Ascending aorta (tissue), 2 donors: ENCODE measurements at regions of chr17 and their contacts with region 1.

Region 1: GRCh38 chr17:75154195-75155106 is at the start of gene JPT1:
- DNase-seq: peak; percentile 95 to 99
- H3K4me3 ChIP-seq: peak within 1 kb of the TSS; percentile 94 to 98
- H3K27ac ChIP-seq: peak within 1 kb of the TSS; percentile 51 to 69
- H3K4me1 ChIP-seq: peaks cover 6% of the 10 kb centered on the region in 2 donors
- H3K27me3 ChIP-seq: no peaks in the 10 kb centered on the region
- CTCF ChIP-seq: peak in 1 of 3 experiments; percentile 14
- total RNA-seq, gene JPT1: 23.0 TPM

Region 2: DNA sequence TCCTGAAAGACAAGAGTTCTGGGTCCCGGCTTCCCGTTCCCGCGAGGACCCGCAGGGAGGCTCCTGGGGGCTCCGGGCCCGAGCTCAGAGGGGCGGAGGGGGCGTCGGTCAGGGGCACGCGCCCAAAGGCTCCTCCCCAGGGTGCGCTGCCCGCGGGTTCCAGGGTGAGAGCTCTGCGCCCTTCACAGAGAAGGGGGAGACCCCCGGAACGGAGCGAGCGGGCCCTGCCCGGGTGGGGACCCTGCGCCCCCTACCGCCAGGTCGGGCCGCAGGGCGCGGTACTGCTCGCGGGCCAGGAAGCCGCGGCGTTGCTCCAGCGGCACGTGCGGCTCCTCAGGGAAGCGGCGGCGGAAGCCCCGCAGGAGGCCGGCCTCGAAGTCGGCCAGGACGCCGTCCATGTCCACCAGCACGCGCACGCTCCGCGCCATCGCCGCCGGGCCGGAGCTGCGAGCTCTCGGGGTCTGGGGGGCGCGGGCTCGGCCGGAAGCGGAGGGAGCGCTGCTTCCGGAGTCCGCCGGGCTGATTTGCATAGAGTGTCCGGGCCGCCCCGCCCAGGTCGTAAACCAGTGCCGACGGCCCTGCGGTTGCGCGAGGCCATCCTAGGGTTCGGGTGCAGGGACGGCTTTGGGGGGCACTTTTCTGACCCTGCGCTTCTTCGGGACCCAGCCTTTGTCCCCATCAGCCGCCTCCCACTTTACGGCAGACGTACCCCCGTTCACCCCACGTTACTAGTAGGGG is 23.0 kb before region 1 on chr17 and contains the start of gene NT5C:
- intact Hi-C with region 1: loop called (anchors 2 kb)
- DNase-seq: peak in 1 of 2 donors; percentile 85
- H3K4me3 ChIP-seq: peak within 1 kb of the TSS; percentile 46 to 85
- H3K27ac ChIP-seq: peak within 1 kb of the TSS; percentile 90
- H3K4me1 ChIP-seq: peaks cover 0 to 6% of the 10 kb centered on the region in 2 donors
- H3K27me3 ChIP-seq: no peaks in the 10 kb centered on the region
- CTCF ChIP-seq: peak; percentile 58 to 76 (median 76)
- total RNA-seq, gene NT5C: 18.3 TPM

Region 3: DNA sequence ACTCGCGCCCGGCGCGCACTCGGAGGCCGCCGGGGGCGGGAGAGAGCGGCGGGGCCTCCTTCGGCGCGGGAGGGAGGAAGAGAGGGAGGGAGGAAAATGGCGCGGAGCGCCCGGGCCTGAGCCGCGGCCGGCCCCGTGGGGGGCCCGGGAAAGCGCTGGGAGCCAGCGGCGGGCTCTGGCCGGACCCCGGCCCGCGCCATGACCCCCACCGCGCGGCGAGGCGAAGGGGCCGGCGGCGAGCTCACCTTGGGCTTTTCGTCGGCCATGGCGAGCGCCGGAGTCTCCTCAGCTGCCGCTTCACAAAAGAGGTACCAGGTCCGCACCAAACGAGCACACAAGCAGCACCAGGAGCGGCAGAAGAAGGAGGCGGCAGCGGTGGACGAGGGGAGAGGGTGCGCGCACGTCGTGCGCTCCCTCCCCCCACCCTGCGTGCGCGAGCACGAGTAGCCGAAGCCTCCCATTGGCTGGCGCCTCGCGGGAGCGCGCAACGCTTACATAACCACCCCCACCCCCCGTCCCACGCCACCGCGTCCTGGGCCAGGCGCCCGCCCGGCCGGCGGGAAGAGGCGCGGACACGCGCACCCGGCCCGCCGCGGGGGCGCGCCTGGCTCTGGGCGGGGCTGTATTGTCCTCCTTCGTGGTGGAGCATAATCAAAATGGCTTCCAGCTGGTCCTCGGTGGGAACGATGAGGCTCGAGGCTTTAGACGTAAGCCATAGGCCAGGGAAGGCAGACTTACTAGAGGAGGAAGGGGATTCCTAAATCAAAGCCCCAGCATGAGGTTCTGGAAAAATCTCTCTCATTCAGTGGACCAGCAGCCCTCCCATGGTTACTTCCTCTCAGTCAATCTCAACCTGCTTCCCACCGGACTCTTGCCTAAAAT is 28.4 kb after region 1 on chr17 and contains the start of gene SUMO2:
- intact Hi-C with region 1: loop called (anchors 1 kb)
- DNase-seq: peak; percentile 70 to 97
- H3K4me3 ChIP-seq: peak within 1 kb of the TSS; percentile 80 to 97
- H3K27ac ChIP-seq: peak within 1 kb of the TSS; percentile 94 to 100
- H3K4me1 ChIP-seq: peaks cover 6 to 18% of the 10 kb centered on the region in 2 donors
- H3K27me3 ChIP-seq: no peaks in the 10 kb centered on the region
- CTCF ChIP-seq: peak in 2 of 3 experiments; percentile 43 to 45
- total RNA-seq, gene SUMO2: 23.9 TPM

Region 4: DNA sequence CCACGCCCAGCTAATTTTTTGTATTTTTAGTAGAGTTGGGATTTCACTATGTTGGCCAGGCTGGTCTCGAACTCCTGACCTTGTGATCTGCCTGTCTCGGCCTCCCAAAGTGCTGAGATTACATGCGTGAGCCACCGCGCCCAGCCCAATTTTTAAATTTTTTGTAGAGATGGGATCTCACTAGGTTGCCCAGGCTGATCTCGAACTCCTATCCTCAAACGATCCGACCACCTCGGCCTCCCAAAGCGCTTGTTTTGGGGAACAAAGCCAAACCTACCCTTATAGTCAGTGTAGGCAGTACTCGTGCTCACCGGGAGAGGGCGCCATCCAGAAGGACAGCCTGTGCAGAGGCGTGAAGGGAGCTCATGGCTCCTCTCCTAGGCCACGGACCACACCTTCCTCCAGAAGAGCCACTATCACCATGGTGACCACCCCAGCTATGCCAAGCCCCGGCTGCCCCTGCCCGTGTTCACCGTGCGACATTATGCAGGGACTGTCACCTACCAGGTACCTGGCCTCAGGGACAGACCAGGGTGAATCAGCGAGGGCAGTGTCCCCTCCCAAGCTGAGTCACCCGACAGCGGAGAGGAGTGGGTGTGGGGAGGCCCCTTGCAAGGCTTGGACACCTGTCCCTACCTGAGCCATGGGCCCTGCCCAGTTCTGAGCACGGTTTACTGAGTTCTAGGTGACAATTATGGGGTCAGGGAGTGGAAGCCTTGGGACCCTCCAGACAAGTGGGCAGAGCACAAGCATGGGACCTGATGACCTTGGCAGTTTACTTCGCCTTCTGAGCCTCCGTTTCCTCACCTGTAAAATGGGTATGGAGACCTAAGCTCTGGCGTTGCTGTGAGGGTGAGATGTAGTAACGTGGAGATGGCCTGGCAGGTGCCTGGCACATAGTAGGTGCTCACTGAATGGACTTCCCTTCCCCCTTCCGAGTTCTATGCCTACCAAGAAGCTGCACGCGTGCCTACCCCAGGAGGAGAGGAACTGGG is 446.9 kb after region 1 on chr17:
- intact Hi-C with region 1: no loop called
- DNase-seq: no peak
- H3K4me3 ChIP-seq: no peak overlapping the region
- H3K27ac ChIP-seq: no peak overlapping the region
- H3K4me1 ChIP-seq: no peaks in the 10 kb centered on the region
- H3K27me3 ChIP-seq: no peaks in the 10 kb centered on the region
- CTCF ChIP-seq: peak; percentile 19 to 55 (median 36)